ENCODE measurements at regions of chr14 and their contacts with region 1.

Region 1: DNA sequence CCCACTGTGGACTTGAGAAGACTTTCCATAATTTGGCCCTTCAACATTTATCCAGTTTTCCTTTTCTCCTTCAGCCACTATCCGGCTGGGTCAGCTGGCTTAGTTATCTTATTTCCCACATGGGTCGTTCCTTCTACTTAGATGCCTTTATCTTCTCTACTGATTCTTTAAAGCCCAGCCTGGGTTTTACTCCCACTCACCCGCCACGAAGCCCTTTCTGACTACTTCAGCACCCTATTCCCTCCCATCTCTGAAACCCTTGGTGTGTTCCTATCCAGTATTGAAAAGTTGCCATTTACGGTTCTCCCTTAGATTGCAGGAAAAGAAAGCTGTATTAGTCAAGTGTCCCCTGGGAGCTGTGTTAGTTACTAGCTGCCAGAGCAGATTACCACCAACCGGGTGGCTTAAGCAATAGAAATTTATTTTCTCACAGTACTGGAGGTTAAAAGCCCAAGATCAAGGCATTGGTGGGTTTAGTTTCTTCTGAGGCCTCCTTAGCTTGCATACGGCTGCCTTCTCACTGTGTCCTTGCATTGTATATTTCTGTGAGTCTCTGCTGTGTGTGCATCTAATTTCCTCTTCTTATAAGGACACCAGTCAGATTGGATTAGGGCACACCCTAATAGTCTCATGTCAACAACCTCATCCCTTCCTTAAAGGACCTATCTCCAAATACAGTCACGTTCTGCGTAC is 105.5 kb downstream of the GPATCH2L start:
- DNase-seq: no peak
- H3K4me3 ChIP-seq: no peak overlapping the region
- CTCF ChIP-seq: no peak

Region 2: DNA sequence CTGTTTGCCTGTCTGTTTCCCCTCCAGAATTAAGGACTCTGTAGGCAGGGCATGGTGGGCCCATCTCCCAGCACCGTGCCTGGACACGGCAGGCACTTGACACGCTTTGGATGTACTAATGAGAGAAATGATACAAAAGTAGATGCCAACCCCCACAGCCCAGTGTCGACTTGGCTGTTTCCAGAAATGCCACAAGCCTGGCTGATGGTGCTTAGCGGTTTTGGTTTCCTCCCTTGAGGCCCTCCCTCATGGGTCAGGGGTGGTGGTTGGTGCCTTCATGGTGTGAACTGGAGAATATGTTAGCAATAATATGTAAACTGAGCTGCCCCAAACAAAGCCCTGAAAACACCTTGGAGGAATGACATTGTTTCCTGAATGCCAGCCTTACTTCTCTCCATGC is 63.2 kb after region 1 on chr14:
- in situ Hi-C with region 1: loop called (anchors 5 kb)
- DNase-seq: no peak
- H3K4me3 ChIP-seq: no peak overlapping the region
- CTCF ChIP-seq: no peak

Measured in astrocyte of the cerebellum (primary cell).